ACHN (cell line): ENCODE measurements at regions of chr7 and their contacts with region 1.

Region 1: DNA sequence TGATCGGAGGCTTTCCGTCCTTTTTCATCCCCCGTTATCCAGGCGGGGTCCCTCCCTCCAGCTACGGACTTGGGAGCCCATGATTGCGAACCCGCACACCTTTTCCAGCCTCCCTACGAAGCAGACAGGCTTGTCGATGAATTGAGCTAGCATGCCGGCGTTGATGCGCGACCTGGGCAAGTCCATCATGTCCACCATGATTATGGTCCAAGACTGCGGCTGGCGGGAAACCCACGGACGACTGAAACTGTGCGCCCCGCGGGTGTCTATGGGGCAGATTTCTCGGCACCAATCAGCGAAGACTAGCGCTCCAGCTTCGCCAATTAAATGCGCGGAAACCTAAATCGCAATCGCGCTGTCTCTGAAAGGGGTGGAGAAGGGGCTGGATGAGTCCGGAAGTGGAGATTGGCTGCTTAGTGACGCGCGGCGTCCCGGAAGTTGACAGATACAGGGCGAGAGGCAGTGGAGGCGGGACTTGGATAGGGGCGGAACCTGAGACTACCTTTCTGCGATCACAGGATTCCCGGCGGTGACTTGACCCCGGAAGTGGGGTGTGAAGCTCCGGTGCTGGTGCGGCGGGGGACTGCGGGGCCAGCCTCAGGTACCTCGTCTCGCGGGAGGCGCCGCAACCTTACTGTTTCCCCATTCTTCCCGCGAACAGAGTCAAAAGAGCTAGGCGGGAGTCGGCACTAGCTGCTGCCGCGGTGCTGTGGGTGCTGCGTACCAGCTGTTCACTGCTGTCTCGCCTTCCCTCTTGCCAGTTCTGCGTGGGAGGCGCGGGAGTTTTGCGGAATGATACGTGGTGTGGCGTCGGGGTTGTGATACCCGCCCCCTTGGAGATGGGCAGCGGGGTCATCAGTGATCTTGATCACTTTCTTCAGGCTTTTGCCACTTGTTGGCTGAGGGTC is at the start of gene UMAD1:
- DNase-seq: peak; percentile 100

Region 2: GRCh38 chr7:8217200-8218068 is 577.0 kb after region 1 on chr7:
- in situ Hi-C with region 1: loop called (anchors 25 kb)
- DNase-seq: peak; percentile 85